ENCODE measurements at regions of chr7 and their contacts with region 1.

Region 1: DNA sequence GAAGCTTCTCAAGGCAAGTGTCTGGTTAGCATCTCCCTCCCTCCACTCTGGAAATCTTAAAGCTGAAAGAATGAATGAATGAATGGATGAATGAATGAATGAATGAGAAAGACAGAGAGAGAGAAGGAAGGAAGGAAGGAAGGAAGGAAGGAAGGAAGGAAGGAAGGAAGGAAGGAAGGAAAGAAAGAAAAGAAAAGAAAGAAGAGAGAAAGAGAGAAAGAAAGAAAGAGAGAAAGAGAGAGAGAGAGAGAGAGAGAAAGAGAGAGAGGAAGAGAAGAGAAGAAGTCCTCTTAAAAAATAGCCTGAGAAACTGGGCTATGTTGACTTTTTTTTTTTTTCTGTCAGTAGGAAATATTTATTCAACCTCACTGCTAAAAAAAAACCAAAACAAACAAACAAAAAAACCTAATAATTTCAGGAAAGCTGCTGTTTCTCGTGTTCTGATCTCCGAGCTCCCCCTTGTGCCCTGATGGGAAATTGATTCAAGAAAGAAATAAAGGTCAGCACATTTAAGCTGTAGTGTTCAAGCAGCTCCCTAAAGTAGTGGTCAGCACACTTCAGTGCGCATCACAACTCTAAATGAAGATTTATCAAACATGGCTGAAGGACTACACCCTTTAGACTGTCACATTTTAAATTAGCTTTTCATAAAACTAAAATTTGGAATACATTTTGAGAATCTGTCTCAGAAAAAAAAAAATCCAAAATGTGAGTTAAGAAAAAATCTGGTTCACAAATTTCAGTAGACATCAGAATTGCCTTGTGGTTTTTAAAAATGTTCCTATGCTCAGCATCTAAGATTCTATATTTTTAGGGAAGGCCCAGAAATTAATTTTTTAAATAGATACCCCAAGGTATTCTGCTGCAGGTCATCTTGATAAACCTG is 154.3 kb downstream of the ELAPOR2 start:
- DNase-seq: peak; percentile 15
- H3K4me3 ChIP-seq: no peak overlapping the region
- H3K27ac ChIP-seq: no peak overlapping the region
- H3K4me1 ChIP-seq: peaks cover 0 to 4% of the 10 kb centered on the region in 2 experiments; a peak in 2 of 4 replicates
- H3K27me3 ChIP-seq: no peaks in the 10 kb centered on the region
- CTCF ChIP-seq: peak; percentile 84
- EP300 ChIP-seq: no peak
- RAD21 ChIP-seq: peak; percentile 86

Region 2: DNA sequence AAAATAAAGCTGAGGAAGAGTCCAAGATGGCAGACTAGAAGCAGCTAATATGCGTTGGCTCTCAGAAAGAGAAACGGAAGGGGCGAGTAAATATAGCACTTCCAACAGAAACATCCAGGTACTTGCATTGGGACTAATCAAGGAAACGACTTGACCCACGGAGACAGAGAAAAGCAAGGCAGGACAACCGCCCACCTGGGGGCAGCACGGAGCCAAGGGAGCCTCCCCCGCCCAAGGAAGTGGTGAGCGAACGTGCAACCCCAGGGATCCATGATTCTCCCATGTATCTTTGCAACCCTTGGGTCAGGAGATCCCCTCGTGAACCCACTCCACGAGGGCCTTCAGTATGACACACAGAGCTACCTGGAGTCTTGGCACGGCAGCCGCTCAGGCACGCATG is 306.9 kb before region 1 on chr7:
- CTCF ChIA-PET with region 1: interaction called, 12 read pairs
- POLR2A ChIA-PET with region 1: no interaction called
- DNase-seq: peak; percentile 53
- H3K4me3 ChIP-seq: no peak overlapping the region
- H3K27ac ChIP-seq: no peak overlapping the region
- H3K4me1 ChIP-seq: peaks cover 0 to 2% of the 10 kb centered on the region in 2 experiments; a peak in 1 of 4 replicates
- H3K27me3 ChIP-seq: no peaks in the 10 kb centered on the region
- CTCF ChIP-seq: peak; percentile 62
- EP300 ChIP-seq: no peak
- RAD21 ChIP-seq: peak; percentile 63

Region 3: GRCh38 chr7:86889501-86889900 is 15.7 kb before region 1 on chr7:
- CTCF ChIA-PET with region 1: interaction called, 22 read pairs
- POLR2A ChIA-PET with region 1: no interaction called
- DNase-seq: no peak
- H3K4me3 ChIP-seq: no peak overlapping the region
- H3K27ac ChIP-seq: no peak overlapping the region
- H3K4me1 ChIP-seq: no peaks in the 10 kb centered on the region
- H3K27me3 ChIP-seq: no peaks in the 10 kb centered on the region
- CTCF ChIP-seq: no peak
- EP300 ChIP-seq: no peak
- RAD21 ChIP-seq: no peak

Region 4: DNA sequence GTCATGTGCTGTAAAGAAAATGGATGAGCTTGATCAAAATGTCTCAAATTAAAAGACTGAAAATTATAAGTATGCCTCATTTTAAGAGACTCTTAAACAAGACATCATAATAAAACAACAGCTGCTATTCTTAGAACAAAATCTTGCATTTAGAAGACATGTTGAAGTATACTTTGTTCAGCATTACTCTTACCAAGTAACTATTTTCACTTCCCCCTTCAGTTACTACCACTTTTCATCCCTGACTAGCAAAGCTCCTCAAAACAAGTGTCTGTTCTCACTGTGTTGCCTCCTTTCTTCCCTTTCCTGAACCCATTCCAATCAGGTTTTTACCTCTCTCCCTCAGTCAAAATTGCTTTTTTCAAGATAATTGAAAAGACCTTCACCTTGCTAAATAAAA is 122.7 kb after region 1 on chr7:
- CTCF ChIA-PET with region 1: no interaction called
- POLR2A ChIA-PET with region 1: no interaction called
- DNase-seq: no peak
- H3K4me3 ChIP-seq: no peak overlapping the region
- H3K27ac ChIP-seq: no peak overlapping the region
- H3K4me1 ChIP-seq: peaks cover 0 to 5% of the 10 kb centered on the region in 2 experiments; a peak in 2 of 4 replicates
- H3K27me3 ChIP-seq: no peaks in the 10 kb centered on the region
- CTCF ChIP-seq: no peak
- EP300 ChIP-seq: no peak
- RAD21 ChIP-seq: no peak

Measured in SK-N-SH (cell line).